CD8-positive, alpha-beta T cell (primary cell): ENCODE measurements at regions of chr4 and their contacts with region 1.

Region 1: DNA sequence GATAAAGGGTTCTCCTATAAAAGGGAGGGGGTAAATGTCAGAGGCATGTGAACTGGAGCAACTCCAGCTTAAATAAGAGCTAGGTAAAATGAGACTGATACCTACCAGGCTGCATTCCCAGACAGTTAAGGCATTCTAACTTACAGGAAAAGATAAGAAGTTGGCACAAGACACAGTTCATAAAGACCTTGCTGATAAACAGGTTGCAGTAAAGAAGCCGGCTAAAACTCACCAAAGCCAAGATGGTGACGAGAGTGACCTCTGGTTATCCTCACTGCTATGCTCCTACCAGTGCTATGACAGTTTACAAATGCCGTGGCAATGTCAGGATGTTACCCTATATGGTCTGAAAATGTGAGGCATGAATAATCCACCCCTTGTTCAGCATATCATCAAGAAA is 13.1 kb upstream of the SULT1B1 start:
- DNase-seq: no peak
- ATAC-seq: no peak
- H3K4me3 ChIP-seq: no peak overlapping the region
- H3K4me3 Mint-ChIP-seq: no peak overlapping the region
- H3K27ac ChIP-seq: no peak overlapping the region
- H3K27ac Mint-ChIP-seq: no peak overlapping the region
- H3K4me1 ChIP-seq: no peaks in the 10 kb centered on the region
- H3K4me1 Mint-ChIP-seq: peaks cover 23% of the 10 kb centered on the region
- H3K27me3 ChIP-seq: no peaks in the 10 kb centered on the region
- H3K27me3 Mint-ChIP-seq: no peaks in the 10 kb centered on the region
- CTCF ChIP-seq: no peak

Region 2: DNA sequence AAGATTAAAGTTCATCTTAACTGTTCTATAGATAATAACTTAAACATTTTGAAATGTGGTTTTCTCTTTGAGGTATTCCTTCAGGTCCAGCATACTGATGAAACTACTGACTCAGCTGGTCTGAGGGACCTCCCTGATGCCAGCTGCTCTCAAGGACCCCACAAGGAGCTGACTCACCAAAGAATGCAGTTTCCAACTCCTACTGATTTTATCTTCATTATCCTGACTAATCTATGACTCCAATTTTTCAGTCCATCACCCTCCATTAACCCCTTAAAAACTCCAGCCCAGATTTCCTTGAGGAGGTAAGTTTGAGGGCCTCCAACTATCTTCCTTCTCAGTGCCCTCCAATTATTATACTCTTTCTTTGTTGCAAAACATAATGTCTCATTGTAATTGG is 276.4 kb before region 1 on chr4:
- CTCF ChIA-PET with region 1: no interaction called
- POLR2A ChIA-PET with region 1: no interaction called
- intact Hi-C with region 1: no loop called
- DNase-seq: no peak
- ATAC-seq: no peak
- H3K4me3 ChIP-seq: no peak overlapping the region
- H3K4me3 Mint-ChIP-seq: no peak overlapping the region
- H3K27ac ChIP-seq: no peak overlapping the region
- H3K27ac Mint-ChIP-seq: no peak overlapping the region
- H3K4me1 ChIP-seq: no peaks in the 10 kb centered on the region
- H3K4me1 Mint-ChIP-seq: no peaks in the 10 kb centered on the region
- H3K27me3 ChIP-seq: no peaks in the 10 kb centered on the region
- H3K27me3 Mint-ChIP-seq: no peaks in the 10 kb centered on the region
- CTCF ChIP-seq: no peak

Region 3: GRCh38 chr4:69731241-69731640 is 42.2 kb before region 1 on chr4:
- CTCF ChIA-PET with region 1: no interaction called
- POLR2A ChIA-PET with region 1: no interaction called
- intact Hi-C with region 1: loop called in 1 of 2 experiments (anchors 5 kb)
- DNase-seq: no peak
- ATAC-seq: no peak
- H3K4me3 ChIP-seq: no peak overlapping the region
- H3K4me3 Mint-ChIP-seq: no peak overlapping the region
- H3K27ac ChIP-seq: no peak overlapping the region
- H3K27ac Mint-ChIP-seq: no peak overlapping the region
- H3K4me1 ChIP-seq: no peaks in the 10 kb centered on the region
- H3K4me1 Mint-ChIP-seq: peaks cover 3% of the 10 kb centered on the region
- H3K27me3 ChIP-seq: no peaks in the 10 kb centered on the region
- H3K27me3 Mint-ChIP-seq: no peaks in the 10 kb centered on the region
- CTCF ChIP-seq: no peak

Region 4: GRCh38 chr4:69760455-69760854 is 13.0 kb before region 1 on chr4 and contains the start of gene SULT1B1:
- CTCF ChIA-PET with region 1: interaction called, 3 read pairs
- POLR2A ChIA-PET with region 1: interaction called, 7 read pairs
- intact Hi-C with region 1: loop called in 1 of 2 experiments (anchors 2 kb)
- DNase-seq: peak in 8 of 9 experiments; percentile 37 to 78 (median 56)
- ATAC-seq: peak; percentile 94
- H3K4me3 ChIP-seq: peak within 1 kb of the TSS; percentile 22 to 43
- H3K4me3 Mint-ChIP-seq: peak within 1 kb of the TSS; percentile 87
- H3K27ac ChIP-seq: peak within 1 kb of the TSS; percentile 34
- H3K27ac Mint-ChIP-seq: peak within 1 kb of the TSS; percentile 91
- H3K4me1 ChIP-seq: peaks cover 47% of the 10 kb centered on the region
- H3K4me1 Mint-ChIP-seq: peaks cover 68% of the 10 kb centered on the region
- H3K27me3 ChIP-seq: no peaks in the 10 kb centered on the region
- H3K27me3 Mint-ChIP-seq: no peaks in the 10 kb centered on the region
- CTCF ChIP-seq: no peak
- total RNA-seq, gene SULT1B1: 4.5 to 5.1 TPM

Region 5: GRCh38 chr4:69800599-69800998 is 27.1 kb after region 1 on chr4:
- CTCF ChIA-PET with region 1: no interaction called
- POLR2A ChIA-PET with region 1: no interaction called
- intact Hi-C with region 1: no loop called
- DNase-seq: no peak
- ATAC-seq: no peak
- H3K4me3 ChIP-seq: no peak overlapping the region
- H3K4me3 Mint-ChIP-seq: no peak overlapping the region
- H3K27ac ChIP-seq: no peak overlapping the region
- H3K27ac Mint-ChIP-seq: no peak overlapping the region
- H3K4me1 ChIP-seq: no peaks in the 10 kb centered on the region
- H3K4me1 Mint-ChIP-seq: no peaks in the 10 kb centered on the region
- H3K27me3 ChIP-seq: no peaks in the 10 kb centered on the region
- H3K27me3 Mint-ChIP-seq: no peaks in the 10 kb centered on the region
- CTCF ChIP-seq: no peak

Region 6: DNA sequence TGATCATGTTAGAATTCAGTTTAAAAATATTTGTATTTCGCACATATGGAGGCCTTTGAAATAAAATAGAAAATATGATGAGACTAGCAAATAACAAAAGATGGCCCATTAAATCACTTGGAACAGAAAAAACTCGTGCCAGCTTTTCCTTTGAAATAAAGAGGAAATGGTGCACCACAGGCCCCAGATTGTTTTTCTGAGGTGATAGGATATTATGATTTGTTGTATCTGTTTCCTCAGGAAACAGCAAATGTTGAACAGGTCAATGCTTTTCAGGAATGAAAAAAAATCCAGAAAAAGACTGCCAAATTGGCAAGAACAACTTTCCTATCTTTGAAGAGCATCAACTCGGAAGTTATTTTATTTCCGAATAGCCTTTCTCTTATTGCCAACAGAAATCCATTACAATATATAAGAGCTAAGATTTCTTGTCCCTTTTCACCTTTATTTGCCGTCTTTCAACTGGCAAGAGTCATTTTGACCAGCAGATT is 609.3 kb after region 1 on chr4 and contains the start of gene SMR3B:
- CTCF ChIA-PET with region 1: no interaction called
- POLR2A ChIA-PET with region 1: no interaction called
- intact Hi-C with region 1: no loop called
- DNase-seq: no peak
- ATAC-seq: no peak
- H3K4me3 ChIP-seq: no peak within 1 kb of the TSS
- H3K4me3 Mint-ChIP-seq: no peak within 1 kb of the TSS
- H3K27ac ChIP-seq: no peak within 1 kb of the TSS
- H3K27ac Mint-ChIP-seq: no peak within 1 kb of the TSS
- H3K4me1 ChIP-seq: no peaks in the 10 kb centered on the region
- H3K4me1 Mint-ChIP-seq: no peaks in the 10 kb centered on the region
- H3K27me3 ChIP-seq: no peaks in the 10 kb centered on the region
- H3K27me3 Mint-ChIP-seq: no peaks in the 10 kb centered on the region
- CTCF ChIP-seq: no peak
- total RNA-seq, gene SMR3B: not detected